ENCODE measurements at regions of chr12 and their contacts with region 1.

Region 1: GRCh38 chr12:6688999-6689882 is at the start of gene ZNF384:
- DNase-seq: peak; percentile 99
- ATAC-seq: peak; percentile 83
- H3K4me3 ChIP-seq: peak within 1 kb of the TSS; percentile 83
- H3K27ac ChIP-seq: peak within 1 kb of the TSS; percentile 89
- H3K4me1 ChIP-seq: peaks cover 5% of the 10 kb centered on the region
- H3K27me3 ChIP-seq: no peaks in the 10 kb centered on the region
- CTCF ChIP-seq: no peak
- POLR2A ChIP-seq: peak; percentile 81
- RAD21 ChIP-seq: no peak
- total RNA-seq, gene ZNF384: 16.3 and 17.5 TPM in 2 replicates

Region 2: GRCh38 chr12:6570264-6570887 is 118.9 kb before region 1 on chr12:
- CTCF ChIA-PET with region 1: no interaction called
- POLR2A ChIA-PET with region 1: no interaction called
- dilution Hi-C with region 1: no loop called
- in situ Hi-C with region 1: loop called (anchors 10 kb)
- intact Hi-C with region 1: no loop called
- DNase-seq: no peak
- ATAC-seq: no peak
- H3K4me3 ChIP-seq: no peak overlapping the region
- H3K27ac ChIP-seq: no peak overlapping the region
- H3K4me1 ChIP-seq: no peaks in the 10 kb centered on the region
- H3K27me3 ChIP-seq: no peaks in the 10 kb centered on the region
- CTCF ChIP-seq: peak; percentile 30; the same call in 1 of the 2 replicates
- POLR2A ChIP-seq: no peak
- RAD21 ChIP-seq: peak; percentile 20; the same call in 1 of the 2 replicates

Region 3: GRCh38 chr12:6662906-6663742 is 26.1 kb before region 1 on chr12 and contains the start of gene ING4:
- CTCF ChIA-PET with region 1: interaction called, 3 read pairs
- POLR2A ChIA-PET with region 1: no interaction called
- dilution Hi-C with region 1: no loop called
- in situ Hi-C with region 1: no loop called
- intact Hi-C with region 1: loop called (anchors 2 kb)
- DNase-seq: peak; percentile 99
- ATAC-seq: peak; percentile 99
- H3K4me3 ChIP-seq: peak within 1 kb of the TSS; percentile 73
- H3K27ac ChIP-seq: peak within 1 kb of the TSS; percentile 71
- H3K4me1 ChIP-seq: no peaks in the 10 kb centered on the region
- H3K27me3 ChIP-seq: no peaks in the 10 kb centered on the region
- CTCF ChIP-seq: no peak
- POLR2A ChIP-seq: peak; percentile 80
- RAD21 ChIP-seq: no peak
- total RNA-seq, gene ING4: 22.0 and 25.3 TPM in 2 replicates

Region 4: DNA sequence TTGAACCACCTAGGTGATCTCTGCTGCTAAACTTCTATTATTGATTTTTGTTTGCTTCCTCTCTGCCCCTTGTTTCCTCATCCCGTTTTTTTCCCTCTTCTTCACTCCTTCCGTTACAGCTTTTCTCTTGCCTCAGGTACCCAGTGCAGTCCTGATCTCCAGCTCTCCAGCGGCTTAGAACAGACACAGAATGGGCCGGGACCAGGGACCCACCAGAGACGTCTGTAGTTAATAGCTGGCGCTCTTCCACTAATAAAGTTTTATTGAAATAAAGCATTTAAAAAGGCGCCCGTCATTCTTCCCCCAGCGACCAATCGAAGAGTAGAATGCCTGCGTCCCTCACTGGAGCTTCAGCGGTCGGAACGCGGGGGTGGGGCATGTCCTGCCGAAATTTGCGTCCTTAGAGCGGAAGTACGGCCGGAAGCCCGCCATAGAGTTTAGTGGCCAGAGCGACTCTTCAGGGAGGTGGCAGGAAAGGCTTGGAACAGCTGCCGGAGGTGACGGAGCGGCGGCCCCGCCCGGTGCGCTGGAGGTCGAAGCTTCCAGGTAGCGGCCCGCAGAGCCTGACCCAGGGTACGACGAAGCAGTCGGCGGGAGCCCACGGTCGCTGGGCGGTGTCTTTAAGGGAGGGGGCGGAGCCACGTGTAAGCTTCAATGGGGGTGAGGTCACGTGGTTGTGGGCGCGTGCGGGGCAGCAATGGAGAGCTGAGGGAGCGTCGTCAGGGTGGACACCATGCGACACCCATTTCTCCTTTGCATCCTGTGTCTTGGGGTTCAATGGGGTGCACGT is 34.6 kb after region 1 on chr12 and contains the start of gene COPS7A:
- CTCF ChIA-PET with region 1: interaction called, 3 read pairs
- POLR2A ChIA-PET with region 1: interaction called, 15 read pairs
- dilution Hi-C with region 1: no loop called
- in situ Hi-C with region 1: no loop called
- intact Hi-C with region 1: loop called (anchors 1 kb)
- DNase-seq: peak; percentile 98
- ATAC-seq: peak; percentile 99
- H3K4me3 ChIP-seq: peak within 1 kb of the TSS; percentile 51
- H3K27ac ChIP-seq: peak within 1 kb of the TSS; percentile 71
- H3K4me1 ChIP-seq: 0 out of 2 replicates have a peak, but pooled peaks cover 2% of the 10 kb centered on the region
- H3K27me3 ChIP-seq: no peaks in the 10 kb centered on the region
- CTCF ChIP-seq: no peak
- POLR2A ChIP-seq: peak; percentile 84
- RAD21 ChIP-seq: no peak
- total RNA-seq, gene COPS7A: 51.4 and 58.8 TPM in 2 replicates

Region 5: DNA sequence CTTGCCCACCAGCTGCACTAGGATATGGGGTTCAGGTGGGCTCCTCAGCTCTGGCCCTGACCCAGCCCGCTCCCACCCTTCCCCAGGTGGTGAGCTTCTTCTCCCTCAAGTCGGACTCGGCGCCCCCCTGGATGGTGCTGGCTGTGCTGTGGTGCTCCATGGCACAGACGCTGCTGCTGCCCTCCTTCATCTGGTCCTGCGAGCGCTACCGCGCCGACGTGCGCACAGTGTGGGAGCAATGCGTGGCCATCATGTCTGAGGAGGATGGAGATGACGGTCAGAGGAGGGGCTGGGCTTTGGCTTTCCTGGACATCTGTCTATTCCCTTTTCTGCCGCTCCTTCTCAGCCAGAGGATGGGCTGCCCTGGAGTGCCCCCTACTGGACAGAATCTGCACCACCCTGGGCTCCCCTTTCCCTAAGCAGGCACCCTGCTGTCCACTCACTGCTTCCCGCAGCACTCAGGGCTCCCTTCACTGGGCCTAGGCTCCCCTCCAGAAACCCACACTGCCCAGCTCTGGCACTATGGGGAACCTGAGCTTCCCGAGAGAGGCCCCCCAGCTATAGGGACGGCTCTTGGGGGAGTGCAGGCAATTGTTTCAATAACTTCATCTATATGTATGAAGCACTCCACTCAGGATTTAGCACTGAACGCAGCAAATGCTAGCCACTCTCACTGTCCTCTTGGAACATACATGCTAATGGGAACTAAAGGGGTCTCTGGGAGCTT is 136.3 kb after region 1 on chr12:
- CTCF ChIA-PET with region 1: no interaction called
- POLR2A ChIA-PET with region 1: no interaction called
- dilution Hi-C with region 1: no loop called
- in situ Hi-C with region 1: no loop called
- intact Hi-C with region 1: loop called (anchors 5 kb)
- DNase-seq: peak; percentile 84
- ATAC-seq: peak; percentile 47
- H3K4me3 ChIP-seq: peak overlapping the region; percentile 18; the same call in 1 of the 2 replicates
- H3K27ac ChIP-seq: no peak overlapping the region
- H3K4me1 ChIP-seq: peaks cover 25% of the 10 kb centered on the region
- H3K27me3 ChIP-seq: peaks cover 2% of the 10 kb centered on the region; the same call in 1 of the 2 replicates
- CTCF ChIP-seq: peak; percentile 97
- POLR2A ChIP-seq: no peak
- RAD21 ChIP-seq: peak; percentile 96

Region 6: DNA sequence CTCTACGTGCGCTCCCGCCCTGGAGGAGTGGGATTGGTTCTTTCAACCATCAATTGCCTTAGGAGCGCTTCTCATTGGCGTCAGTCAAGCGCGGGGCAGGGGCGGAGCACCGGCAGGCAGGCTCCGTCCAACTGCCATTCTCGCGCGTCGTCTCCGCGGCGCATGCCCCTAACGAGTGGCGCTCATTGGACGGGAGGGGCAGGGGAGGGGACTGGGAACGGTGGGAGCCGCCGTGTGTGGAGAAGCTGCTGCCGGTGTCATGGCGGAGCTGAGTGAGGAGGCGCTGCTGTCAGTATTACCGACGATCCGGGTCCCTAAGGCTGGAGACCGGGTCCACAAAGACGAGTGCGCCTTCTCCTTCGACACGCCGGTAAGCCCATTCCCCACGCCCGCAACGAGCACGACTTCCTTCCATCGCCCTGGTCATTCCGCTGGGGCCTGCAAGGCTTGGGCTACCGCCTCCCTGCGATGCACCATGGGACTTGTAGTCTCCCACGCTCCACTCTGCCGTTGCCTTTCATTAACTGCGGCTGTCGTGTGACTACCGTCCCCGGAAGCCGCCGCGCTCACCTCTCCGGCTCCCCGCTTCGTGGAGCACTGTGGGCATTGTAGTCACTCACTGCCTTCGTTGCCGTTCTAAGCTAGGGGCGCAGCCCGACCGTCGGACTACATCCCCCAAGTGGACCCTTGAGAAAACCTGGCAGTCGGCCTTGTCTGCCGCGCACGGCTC is 162.8 kb after region 1 on chr12 and contains the start of gene USP5:
- CTCF ChIA-PET with region 1: no interaction called
- POLR2A ChIA-PET with region 1: no interaction called
- dilution Hi-C with region 1: no loop called
- in situ Hi-C with region 1: no loop called
- intact Hi-C with region 1: no loop called
- DNase-seq: peak; percentile 100
- ATAC-seq: peak; percentile 84
- H3K4me3 ChIP-seq: peak within 1 kb of the TSS; percentile 63
- H3K27ac ChIP-seq: peak within 1 kb of the TSS; percentile 87
- H3K4me1 ChIP-seq: peaks cover 5% of the 10 kb centered on the region
- H3K27me3 ChIP-seq: no peaks in the 10 kb centered on the region
- CTCF ChIP-seq: no peak
- POLR2A ChIP-seq: no peak
- RAD21 ChIP-seq: no peak
- total RNA-seq, gene USP5: 119 and 125 TPM in 2 replicates

Measured in IMR-90 (cell line).